Activated B cell treated with CpG ODN at 0.5 μM for 24 hours (primary cell): ENCODE measurements at regions of chr10 and their contacts with region 1.

Region 1: DNA sequence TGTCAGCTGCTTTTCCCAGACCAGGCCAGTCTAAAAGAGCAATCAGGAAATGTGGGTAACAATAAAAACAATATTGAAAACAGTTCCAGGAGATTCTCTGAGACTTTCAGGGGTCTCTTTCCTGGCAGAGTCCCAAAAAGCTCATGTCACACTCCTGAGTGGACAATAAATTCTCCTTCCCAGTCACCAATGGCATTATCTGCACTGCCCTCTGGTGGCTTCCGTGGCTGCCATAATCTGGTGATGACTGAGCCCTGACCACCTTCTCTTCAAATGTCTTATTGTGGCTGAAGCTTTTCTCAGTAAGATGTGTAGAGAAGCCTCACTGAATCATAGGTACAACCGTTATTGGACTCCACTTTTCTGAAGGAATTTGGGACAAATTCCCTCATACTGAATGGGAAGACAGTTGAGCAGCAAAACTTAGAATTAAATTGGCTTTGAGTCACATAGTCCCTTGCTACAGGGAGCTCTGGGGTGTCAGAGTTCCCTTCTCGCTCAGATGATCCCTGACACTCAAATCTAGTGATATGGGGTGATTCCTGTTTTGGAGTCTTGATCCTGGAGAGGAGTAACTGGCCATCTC is 24.4 kb upstream of the ASAH2 start:
- DNase-seq: no peak
- ATAC-seq: peak; percentile 71
- H3K4me3 Mint-ChIP-seq: no peak overlapping the region
- H3K27ac Mint-ChIP-seq: no peak overlapping the region
- H3K4me1 Mint-ChIP-seq: peaks cover 1% of the 10 kb centered on the region
- H3K27me3 Mint-ChIP-seq: peaks cover 13% of the 10 kb centered on the region
- CTCF ChIP-seq: no peak

Region 2: GRCh38 chr10:49592726-49593563 is 682.8 kb before region 1 on chr10:
- CTCF ChIA-PET with region 1: interaction called, 12 read pairs
- POLR2A ChIA-PET with region 1: no interaction called
- intact Hi-C with region 1: loop called (anchors 1 kb)
- DNase-seq: peak; percentile 37
- ATAC-seq: peak; percentile 81
- H3K4me3 Mint-ChIP-seq: no peak overlapping the region
- H3K27ac Mint-ChIP-seq: no peak overlapping the region
- H3K4me1 Mint-ChIP-seq: no peaks in the 10 kb centered on the region
- H3K27me3 Mint-ChIP-seq: peaks cover 22% of the 10 kb centered on the region
- CTCF ChIP-seq: peak; percentile 44

Region 3: GRCh38 chr10:50224330-50224952 is 51.3 kb before region 1 on chr10:
- CTCF ChIA-PET with region 1: interaction called, 3 read pairs
- POLR2A ChIA-PET with region 1: no interaction called
- intact Hi-C with region 1: loop called (anchors 2 kb)
- DNase-seq: no peak
- ATAC-seq: peak; percentile 69
- H3K4me3 Mint-ChIP-seq: no peak overlapping the region
- H3K27ac Mint-ChIP-seq: no peak overlapping the region
- H3K4me1 Mint-ChIP-seq: no peaks in the 10 kb centered on the region
- H3K27me3 Mint-ChIP-seq: peaks cover 9% of the 10 kb centered on the region
- CTCF ChIP-seq: no peak

Region 4: DNA sequence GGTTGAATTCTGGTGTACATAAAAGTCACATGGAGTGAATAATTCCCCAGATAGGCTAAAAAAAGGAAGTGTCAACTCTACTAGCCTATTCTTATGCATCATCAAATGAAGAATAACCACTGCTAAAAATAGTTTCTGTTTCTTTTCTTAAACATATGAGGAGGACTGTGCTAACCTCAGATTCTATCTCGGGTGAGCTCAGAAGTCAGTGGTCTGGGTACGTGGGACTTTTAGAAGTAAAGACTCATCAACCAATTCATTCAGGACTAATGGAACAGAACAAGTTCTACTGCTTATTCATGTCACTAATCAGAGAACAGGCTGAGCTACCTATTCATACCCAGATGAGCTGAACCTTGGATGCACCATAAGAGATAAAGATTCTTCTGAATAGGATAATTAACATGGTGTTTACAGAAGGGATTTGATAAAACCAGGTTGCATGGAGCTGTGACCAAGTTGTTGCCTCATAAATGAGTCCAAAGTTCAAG is 14.9 kb before region 1 on chr10:
- CTCF ChIA-PET with region 1: interaction called, 9 read pairs
- POLR2A ChIA-PET with region 1: no interaction called
- intact Hi-C with region 1: loop called (anchors 1 kb)
- DNase-seq: no peak
- ATAC-seq: peak; percentile 97
- H3K4me3 Mint-ChIP-seq: peak overlapping the region; percentile 57
- H3K27ac Mint-ChIP-seq: peak overlapping the region; percentile 60
- H3K4me1 Mint-ChIP-seq: peaks cover 36% of the 10 kb centered on the region
- H3K27me3 Mint-ChIP-seq: peaks cover 12% of the 10 kb centered on the region
- CTCF ChIP-seq: no peak